H1 (cell line): ENCODE measurements at regions of chr7 and their contacts with region 1.

Region 1: DNA sequence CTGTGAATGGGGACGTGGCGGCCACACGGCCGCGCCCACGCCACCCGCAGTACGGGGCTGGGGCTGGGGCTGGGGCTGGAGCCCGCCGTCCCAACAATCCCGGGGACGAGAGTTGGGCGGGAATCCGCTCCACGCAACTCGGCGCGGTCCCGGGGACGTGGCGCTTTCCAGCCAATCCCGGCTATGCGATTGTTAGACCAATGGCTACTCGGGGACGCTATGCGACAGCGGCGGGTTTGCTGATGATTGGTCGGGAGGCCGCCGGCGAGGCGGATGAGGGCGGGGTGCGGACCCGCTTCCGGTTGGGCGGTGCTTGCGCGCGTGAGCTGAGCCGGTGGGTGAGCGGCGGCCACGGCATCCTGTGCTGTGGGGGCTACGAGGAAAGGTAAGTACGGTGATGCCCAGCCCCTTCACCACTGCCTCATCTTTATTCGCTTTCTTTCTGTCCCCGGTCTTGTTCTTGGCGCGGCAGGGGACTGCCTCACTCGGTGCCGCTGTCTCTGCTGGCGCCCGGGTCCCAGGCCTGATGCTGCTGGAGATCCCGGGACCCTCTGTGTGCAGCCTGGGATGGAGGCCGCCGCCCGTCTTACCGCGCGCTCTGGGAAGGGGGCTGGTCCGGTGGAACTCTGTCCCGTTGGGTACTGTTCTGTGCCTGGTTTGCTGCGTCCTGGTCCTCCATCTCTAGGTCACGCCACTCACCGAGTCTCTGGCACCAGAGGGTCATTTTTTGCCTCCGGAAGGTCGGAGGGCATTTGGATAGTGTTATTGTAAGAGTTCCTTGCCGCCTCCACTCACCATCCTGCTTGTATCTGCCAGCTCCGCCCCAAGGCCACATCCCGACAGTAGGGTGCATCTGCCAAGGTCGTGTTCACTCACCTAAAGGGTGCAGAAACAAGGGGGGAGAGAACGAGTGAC is at the start of gene CALU:
- DNase-seq: peak; percentile 82 to 94
- H3K4me3 ChIP-seq: peak within 1 kb of the TSS; percentile 87 to 96 (median 93)
- H3K27ac ChIP-seq: peak within 1 kb of the TSS; percentile 76
- H3K4me1 ChIP-seq: peaks cover 0 to 5% (median 2%) of the 10 kb centered on the region in 4 experiments; a peak in 3 of 7 replicates
- H3K27me3 ChIP-seq: peaks cover 0 to 1% (median 0%) of the 10 kb centered on the region in 4 experiments; a peak in 2 of 7 replicates
- CTCF ChIP-seq: no peak
- EP300 ChIP-seq: no peak
- POLR2A ChIP-seq: peak; percentile 60 to 93
- RAD21 ChIP-seq: no peak
- total RNA-seq, gene CALU: 169 and 170 TPM in 2 replicates

Region 2: GRCh38 chr7:128591705-128592104 is 147.6 kb before region 1 on chr7:
- CTCF ChIA-PET with region 1: no interaction called
- POLR2A ChIA-PET with region 1: no interaction called
- DNase-seq: no peak
- H3K4me3 ChIP-seq: no peak overlapping the region
- H3K27ac ChIP-seq: no peak overlapping the region
- H3K4me1 ChIP-seq: no peaks in the 10 kb centered on the region
- H3K27me3 ChIP-seq: no peaks in the 10 kb centered on the region
- CTCF ChIP-seq: no peak
- EP300 ChIP-seq: no peak
- POLR2A ChIP-seq: no peak
- RAD21 ChIP-seq: no peak

Region 3: DNA sequence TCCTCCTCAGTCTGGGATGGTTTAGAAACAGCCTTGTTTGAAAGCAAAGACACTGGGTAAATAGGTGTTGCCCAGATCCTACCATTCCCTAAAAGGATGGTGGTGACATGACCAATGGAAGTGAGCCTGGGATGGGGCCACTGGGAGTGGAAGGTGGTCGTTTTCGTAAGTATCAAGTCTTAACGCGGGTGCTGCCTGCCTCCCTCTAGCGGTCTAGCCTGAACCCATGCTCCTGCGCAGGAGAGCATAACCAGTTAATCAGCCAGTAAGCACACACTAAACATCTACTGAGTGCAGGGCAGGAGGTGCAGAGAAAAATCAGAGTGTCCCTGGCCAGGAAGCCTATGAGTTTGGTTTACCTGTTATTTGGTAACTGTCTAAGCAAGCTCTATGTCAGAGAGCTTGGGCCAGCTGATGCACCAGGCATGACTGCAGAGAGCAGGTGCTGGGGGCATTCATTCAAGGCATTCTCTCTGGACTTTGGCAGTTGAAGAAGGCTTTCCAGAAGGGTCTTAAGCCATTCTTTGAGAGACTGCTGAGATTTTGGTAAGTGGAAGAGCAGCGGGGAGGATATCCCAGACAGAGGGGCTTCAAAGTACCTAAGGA is 66.3 kb before region 1 on chr7:
- CTCF ChIA-PET with region 1: interaction called, 16 read pairs
- POLR2A ChIA-PET with region 1: no interaction called
- DNase-seq: peak; percentile 41 to 70
- H3K4me3 ChIP-seq: no peak overlapping the region
- H3K27ac ChIP-seq: no peak overlapping the region
- H3K4me1 ChIP-seq: no peaks in the 10 kb centered on the region
- H3K27me3 ChIP-seq: no peaks in the 10 kb centered on the region; a peak in 1 of 7 replicates
- CTCF ChIP-seq: peak; percentile 67 to 93 (median 88)
- EP300 ChIP-seq: no peak
- POLR2A ChIP-seq: no peak
- RAD21 ChIP-seq: peak; percentile 53 to 63; a peak in 3 of 4 replicates

Region 4: GRCh38 chr7:128708235-128708634 is 31.1 kb before region 1 on chr7:
- CTCF ChIA-PET with region 1: no interaction called
- POLR2A ChIA-PET with region 1: interaction called, 11 read pairs
- DNase-seq: no peak
- H3K4me3 ChIP-seq: peak overlapping the region in 2 of 4 experiments; percentile 5 to 42; a peak in 2 of 8 replicates
- H3K27ac ChIP-seq: peak overlapping the region; percentile 30; the same call in 1 of the 2 replicates
- H3K4me1 ChIP-seq: peaks cover 2 to 10% (median 6%) of the 10 kb centered on the region in 4 experiments; a peak in 4 of 7 replicates
- H3K27me3 ChIP-seq: no peaks in the 10 kb centered on the region
- CTCF ChIP-seq: no peak
- EP300 ChIP-seq: no peak
- POLR2A ChIP-seq: no peak
- RAD21 ChIP-seq: no peak

Region 5: GRCh38 chr7:128821724-128822123 is 82.4 kb after region 1 on chr7:
- CTCF ChIA-PET with region 1: no interaction called
- POLR2A ChIA-PET with region 1: no interaction called
- DNase-seq: no peak
- H3K4me3 ChIP-seq: no peak overlapping the region
- H3K27ac ChIP-seq: no peak overlapping the region
- H3K4me1 ChIP-seq: no peaks in the 10 kb centered on the region
- H3K27me3 ChIP-seq: no peaks in the 10 kb centered on the region
- CTCF ChIP-seq: no peak
- EP300 ChIP-seq: no peak
- POLR2A ChIP-seq: no peak
- RAD21 ChIP-seq: no peak

Region 6: GRCh38 chr7:129091484-129092002 is 352.2 kb after region 1 on chr7:
- CTCF ChIA-PET with region 1: no interaction called
- POLR2A ChIA-PET with region 1: no interaction called
- DNase-seq: peak; percentile 83 to 100
- H3K4me3 ChIP-seq: no peak overlapping the region
- H3K27ac ChIP-seq: no peak overlapping the region
- H3K4me1 ChIP-seq: no peaks in the 10 kb centered on the region
- H3K27me3 ChIP-seq: no peaks in the 10 kb centered on the region
- CTCF ChIP-seq: peak; percentile 98 to 99 (median 99)
- EP300 ChIP-seq: no peak
- POLR2A ChIP-seq: no peak
- RAD21 ChIP-seq: peak; percentile 99 to 100